ENCODE measurements at regions of chr17 and their contacts with region 1.

Region 1: GRCh38 chr17:76264755-76265596 is at the start of gene UBALD2:
- DNase-seq: peak; percentile 97 to 99 (median 99)
- H3K4me3 ChIP-seq: peak within 1 kb of the TSS; percentile 87
- H3K4me3 Mint-ChIP-seq: peak within 1 kb of the TSS; percentile 88 to 96 (median 91)
- H3K27ac ChIP-seq: peak within 1 kb of the TSS; percentile 79
- H3K27ac Mint-ChIP-seq: peak within 1 kb of the TSS; percentile 90 to 100 (median 96)
- H3K4me1 ChIP-seq: peaks cover 69% of the 10 kb centered on the region
- H3K4me1 Mint-ChIP-seq: peaks cover 57 to 70% (median 57%) of the 10 kb centered on the region in 3 donors
- H3K27me3 ChIP-seq: no peaks in the 10 kb centered on the region
- H3K27me3 Mint-ChIP-seq: no peaks in the 10 kb centered on the region
- total RNA-seq, gene UBALD2: 125 to 133 TPM

Region 2: GRCh38 chr17:76075364-76076145 is 189.4 kb before region 1 on chr17:
- CTCF ChIA-PET with region 1: no interaction called
- POLR2A ChIA-PET with region 1: interaction called, 11 read pairs
- DNase-seq: no peak
- H3K4me3 ChIP-seq: peak overlapping the region; percentile 32
- H3K4me3 Mint-ChIP-seq: peak overlapping the region; percentile 56 to 83 (median 75)
- H3K27ac ChIP-seq: no peak overlapping the region
- H3K27ac Mint-ChIP-seq: peak overlapping the region in 3 of 8 donors; percentile 51 to 81 (median 70)
- H3K4me1 ChIP-seq: peaks cover 61% of the 10 kb centered on the region
- H3K4me1 Mint-ChIP-seq: peaks cover 37 to 77% (median 40%) of the 10 kb centered on the region in 3 donors
- H3K27me3 ChIP-seq: peaks cover 32% of the 10 kb centered on the region
- H3K27me3 Mint-ChIP-seq: peaks cover 32 to 37% of the 10 kb centered on the region in 2 donors

Region 3: GRCh38 chr17:76121932-76122430 is 143.0 kb before region 1 on chr17:
- CTCF ChIA-PET with region 1: interaction called, 46 read pairs
- POLR2A ChIA-PET with region 1: interaction called, 5 read pairs
- DNase-seq: peak in 1 of 5 donors; percentile 26
- H3K4me3 ChIP-seq: peak overlapping the region; percentile 45
- H3K4me3 Mint-ChIP-seq: peak overlapping the region in 3 of 7 donors; percentile 44 to 82 (median 46)
- H3K27ac ChIP-seq: no peak overlapping the region
- H3K27ac Mint-ChIP-seq: peak overlapping the region in 1 of 8 donors; percentile 61
- H3K4me1 ChIP-seq: peaks cover 6% of the 10 kb centered on the region
- H3K4me1 Mint-ChIP-seq: peaks cover 3 to 15% (median 5%) of the 10 kb centered on the region in 3 donors
- H3K27me3 ChIP-seq: no peaks in the 10 kb centered on the region
- H3K27me3 Mint-ChIP-seq: no peaks in the 10 kb centered on the region

Region 4: GRCh38 chr17:76240461-76241203 is 24.3 kb before region 1 on chr17 and contains the start of gene RNF157:
- CTCF ChIA-PET with region 1: interaction called, 15 read pairs
- POLR2A ChIA-PET with region 1: interaction called, 29 read pairs
- DNase-seq: peak; percentile 54 to 79 (median 71)
- H3K4me3 ChIP-seq: peak within 1 kb of the TSS; percentile 49
- H3K4me3 Mint-ChIP-seq: peak within 1 kb of the TSS; percentile 84 to 94 (median 91)
- H3K27ac ChIP-seq: peak within 1 kb of the TSS; percentile 55
- H3K27ac Mint-ChIP-seq: peak within 1 kb of the TSS; percentile 76 to 96 (median 90)
- H3K4me1 ChIP-seq: peaks cover 56% of the 10 kb centered on the region
- H3K4me1 Mint-ChIP-seq: peaks cover 26 to 61% (median 61%) of the 10 kb centered on the region in 3 donors
- H3K27me3 ChIP-seq: no peaks in the 10 kb centered on the region
- H3K27me3 Mint-ChIP-seq: no peaks in the 10 kb centered on the region
- total RNA-seq, gene RNF157: 13.9 TPM

Region 5: GRCh38 chr17:76246080-76247066 is 18.6 kb before region 1 on chr17:
- CTCF ChIA-PET with region 1: interaction called, 15 read pairs
- POLR2A ChIA-PET with region 1: interaction called, 29 read pairs
- DNase-seq: peak in 2 of 5 donors; percentile 44 to 60
- H3K4me3 ChIP-seq: peak overlapping the region; percentile 54
- H3K4me3 Mint-ChIP-seq: peak overlapping the region; percentile 14 to 74 (median 59)
- H3K27ac ChIP-seq: peak overlapping the region; percentile 19
- H3K27ac Mint-ChIP-seq: peak overlapping the region; percentile 37 to 95 (median 80)
- H3K4me1 ChIP-seq: peaks cover 58% of the 10 kb centered on the region
- H3K4me1 Mint-ChIP-seq: peaks cover 22 to 57% (median 47%) of the 10 kb centered on the region in 3 donors
- H3K27me3 ChIP-seq: no peaks in the 10 kb centered on the region
- H3K27me3 Mint-ChIP-seq: peaks cover 0 to under 1% of the 10 kb centered on the region in 2 donors

Region 6: GRCh38 chr17:76252040-76252954 is 12.7 kb before region 1 on chr17:
- CTCF ChIA-PET with region 1: interaction called, 15 read pairs
- POLR2A ChIA-PET with region 1: interaction called, 34 read pairs
- DNase-seq: peak in 1 of 5 donors; percentile 54
- H3K4me3 ChIP-seq: peak overlapping the region; percentile 42
- H3K4me3 Mint-ChIP-seq: peak overlapping the region; percentile 12 to 87 (median 77)
- H3K27ac ChIP-seq: no peak overlapping the region
- H3K27ac Mint-ChIP-seq: peak overlapping the region; percentile 89 to 97 (median 94)
- H3K4me1 ChIP-seq: peaks cover 52% of the 10 kb centered on the region
- H3K4me1 Mint-ChIP-seq: peaks cover 42 to 61% (median 51%) of the 10 kb centered on the region in 3 donors
- H3K27me3 ChIP-seq: no peaks in the 10 kb centered on the region
- H3K27me3 Mint-ChIP-seq: peaks cover 0 to 3% of the 10 kb centered on the region in 2 donors